Gastrocnemius medialis (tissue), 4 donors: ENCODE measurements at regions of chr1 and their contacts with region 1.

Region 1: GRCh38 chr1:26826261-26827105 is at the start of gene ZDHHC18:
- DNase-seq: peak; percentile 25 to 55
- ATAC-seq: peak; percentile 91 to 94
- H3K4me3 ChIP-seq: peak within 1 kb of the TSS; percentile 73 to 94 (median 78)
- H3K27ac ChIP-seq: peak within 1 kb of the TSS; percentile 78 to 83 (median 81)
- H3K4me1 ChIP-seq: peaks cover 20 to 26% of the 10 kb centered on the region in 2 donors
- H3K27me3 ChIP-seq: no peaks in the 10 kb centered on the region
- CTCF ChIP-seq: peak; percentile 49 to 83 (median 71)
- POLR2A ChIP-seq: peak; percentile 22 to 55
- total RNA-seq, gene ZDHHC18: 8.1 to 16.3 (median 12.5) TPM

Region 2: DNA sequence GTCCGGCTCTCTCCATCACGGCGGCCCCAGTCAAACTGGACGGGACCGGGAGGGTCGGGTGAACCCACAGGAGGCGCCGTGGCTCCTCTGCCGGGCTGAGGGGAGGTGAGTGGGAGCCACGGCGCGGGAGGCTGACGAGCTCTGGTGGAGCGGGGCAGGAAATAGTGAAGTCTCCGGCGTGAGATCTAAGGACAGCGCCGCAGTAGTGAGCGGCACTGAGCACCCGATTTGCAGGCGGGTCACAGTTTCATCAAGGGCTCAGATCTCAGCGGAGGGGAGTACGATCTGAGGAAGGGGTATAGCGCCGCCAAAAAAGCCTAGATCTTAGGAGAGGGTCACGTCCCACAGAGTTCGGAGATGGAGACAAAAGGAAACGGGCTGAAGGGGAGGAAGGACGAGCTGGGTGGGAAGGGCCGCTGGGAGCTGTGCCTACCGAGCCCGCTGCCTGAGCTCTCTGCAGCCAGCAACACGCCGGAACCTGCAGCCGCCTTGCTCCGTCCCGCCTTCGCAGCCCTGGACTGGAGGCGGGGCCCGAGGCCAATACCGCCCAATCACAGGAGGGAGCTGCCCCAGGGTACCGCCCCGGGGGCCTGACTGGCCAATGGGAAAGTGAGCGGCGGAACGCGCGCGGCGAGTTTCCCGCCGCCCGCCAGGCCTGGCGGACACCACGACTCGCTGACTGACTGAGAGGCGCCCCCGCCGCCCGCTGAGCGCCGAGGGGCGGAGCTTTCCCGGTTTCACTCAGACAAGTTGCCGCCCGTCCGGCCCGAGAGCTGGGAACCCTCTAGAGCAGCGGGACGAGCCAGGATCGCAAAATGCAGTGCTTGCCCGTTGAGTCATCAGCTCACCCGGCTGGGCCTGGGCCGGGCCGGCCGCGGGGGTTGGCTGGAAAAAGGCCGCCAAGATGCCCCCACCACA is 38.4 kb after region 1 on chr1:
- in situ Hi-C with region 1: no loop called
- intact Hi-C with region 1: loop called (anchors 2 kb)
- DNase-seq: peak; percentile 93 to 98
- ATAC-seq: peak; percentile 94 to 98
- H3K4me3 ChIP-seq: peak overlapping the region; percentile 62 to 91 (median 78)
- H3K27ac ChIP-seq: peak overlapping the region; percentile 90 to 98 (median 96)
- H3K4me1 ChIP-seq: peaks cover 4 to 17% of the 10 kb centered on the region in 2 donors
- H3K27me3 ChIP-seq: no peaks in the 10 kb centered on the region
- CTCF ChIP-seq: peak in 1 of 5 experiments; percentile 4
- POLR2A ChIP-seq: peak; percentile 52 to 70

Region 3: GRCh38 chr1:27086026-27086425 is 259.5 kb after region 1 on chr1:
- in situ Hi-C with region 1: no loop called
- intact Hi-C with region 1: no loop called
- DNase-seq: no peak
- ATAC-seq: no peak
- H3K4me3 ChIP-seq: no peak overlapping the region
- H3K27ac ChIP-seq: no peak overlapping the region
- H3K4me1 ChIP-seq: no peaks in the 10 kb centered on the region
- H3K27me3 ChIP-seq: no peaks in the 10 kb centered on the region
- CTCF ChIP-seq: no peak
- POLR2A ChIP-seq: no peak